HCT116 (cell line): ENCODE measurements at regions of chr22 and their contacts with region 1.

Region 1: GRCh38 chr22:36180038-36180880 is 19.7 kb upstream of the APOL3 start:
- DNase-seq: peak; percentile 42
- ATAC-seq: peak; percentile 98
- H3K4me3 ChIP-seq: no peak overlapping the region
- H3K27ac ChIP-seq: no peak overlapping the region
- H3K4me1 ChIP-seq: no peaks in the 10 kb centered on the region
- H3K27me3 ChIP-seq: peaks cover 3% of the 10 kb centered on the region; the same call in 1 of the 2 replicates
- CTCF ChIP-seq: peak; percentile 66 to 89 (median 87); a peak in 5 of 6 replicates
- POLR2A ChIP-seq: no peak
- RAD21 ChIP-seq: peak; percentile 54

Region 2: GRCh38 chr22:36162127-36163034 is 17.9 kb before region 1 on chr22:
- CTCF ChIA-PET with region 1: interaction called, 10 read pairs
- POLR2A ChIA-PET with region 1: no interaction called
- RAD21 ChIA-PET with region 1: no interaction called
- intact Hi-C with region 1: no loop called
- DNase-seq: no peak
- ATAC-seq: no peak
- H3K4me3 ChIP-seq: no peak overlapping the region
- H3K27ac ChIP-seq: no peak overlapping the region
- H3K4me1 ChIP-seq: no peaks in the 10 kb centered on the region
- H3K27me3 ChIP-seq: peaks cover 4% of the 10 kb centered on the region; the same call in 1 of the 2 replicates
- CTCF ChIP-seq: no peak
- POLR2A ChIP-seq: no peak
- RAD21 ChIP-seq: no peak

Region 3: GRCh38 chr22:36280379-36280778 is 100.1 kb after region 1 on chr22:
- CTCF ChIA-PET with region 1: no interaction called
- POLR2A ChIA-PET with region 1: no interaction called
- RAD21 ChIA-PET with region 1: no interaction called
- intact Hi-C with region 1: no loop called
- DNase-seq: no peak
- ATAC-seq: no peak
- H3K4me3 ChIP-seq: no peak overlapping the region
- H3K27ac ChIP-seq: no peak overlapping the region
- H3K4me1 ChIP-seq: peaks cover 0 to 8% of the 10 kb centered on the region in 2 experiments; a peak in 2 of 4 replicates
- H3K27me3 ChIP-seq: no peaks in the 10 kb centered on the region
- CTCF ChIP-seq: no peak
- POLR2A ChIP-seq: no peak
- RAD21 ChIP-seq: no peak